Activated T-helper 1 cell treated with anti-CD3 and anti-CD28 coated beads, Interleukin-12 subunit alpha, Interleukin-12 subunit beta, Interleukin-2, Interleukin-4 antibody, amounts not matched to agents 30 ng/mL and 10 ng/mL and 1 ng/mL, durations not matched to agents 14 hours and 24 hours and 36 hours (primary cell): ENCODE measurements at regions of chr5 and their contacts with region 1.

Region 1: GRCh38 chr5:132490486-132491367 is at the start of gene IRF1:
- DNase-seq: peak; percentile 99
- H3K4me3 Mint-ChIP-seq: peak within 1 kb of the TSS; percentile 99
- H3K27ac Mint-ChIP-seq: peak within 1 kb of the TSS; percentile 95
- H3K4me1 Mint-ChIP-seq: peaks cover 76% of the 10 kb centered on the region
- H3K27me3 Mint-ChIP-seq: no peaks in the 10 kb centered on the region
- total RNA-seq, gene IRF1: 190 and 198 TPM in 2 replicates

Region 2: GRCh38 chr5:132094393-132095076 is 396.2 kb before region 1 on chr5:
- intact Hi-C with region 1: loop called (anchors 5 kb)
- DNase-seq: no peak
- H3K4me3 Mint-ChIP-seq: peak overlapping the region; percentile 8
- H3K27ac Mint-ChIP-seq: peak overlapping the region; percentile 90
- H3K4me1 Mint-ChIP-seq: peaks cover 80% of the 10 kb centered on the region
- H3K27me3 Mint-ChIP-seq: no peaks in the 10 kb centered on the region

Region 3: GRCh38 chr5:132410451-132411381 is 80.0 kb before region 1 on chr5:
- intact Hi-C with region 1: loop called (anchors 1 kb)
- DNase-seq: peak; percentile 90
- H3K4me3 Mint-ChIP-seq: peak overlapping the region; percentile 99
- H3K27ac Mint-ChIP-seq: peak overlapping the region; percentile 100
- H3K4me1 Mint-ChIP-seq: peaks cover 81% of the 10 kb centered on the region
- H3K27me3 Mint-ChIP-seq: no peaks in the 10 kb centered on the region

Region 4: DNA sequence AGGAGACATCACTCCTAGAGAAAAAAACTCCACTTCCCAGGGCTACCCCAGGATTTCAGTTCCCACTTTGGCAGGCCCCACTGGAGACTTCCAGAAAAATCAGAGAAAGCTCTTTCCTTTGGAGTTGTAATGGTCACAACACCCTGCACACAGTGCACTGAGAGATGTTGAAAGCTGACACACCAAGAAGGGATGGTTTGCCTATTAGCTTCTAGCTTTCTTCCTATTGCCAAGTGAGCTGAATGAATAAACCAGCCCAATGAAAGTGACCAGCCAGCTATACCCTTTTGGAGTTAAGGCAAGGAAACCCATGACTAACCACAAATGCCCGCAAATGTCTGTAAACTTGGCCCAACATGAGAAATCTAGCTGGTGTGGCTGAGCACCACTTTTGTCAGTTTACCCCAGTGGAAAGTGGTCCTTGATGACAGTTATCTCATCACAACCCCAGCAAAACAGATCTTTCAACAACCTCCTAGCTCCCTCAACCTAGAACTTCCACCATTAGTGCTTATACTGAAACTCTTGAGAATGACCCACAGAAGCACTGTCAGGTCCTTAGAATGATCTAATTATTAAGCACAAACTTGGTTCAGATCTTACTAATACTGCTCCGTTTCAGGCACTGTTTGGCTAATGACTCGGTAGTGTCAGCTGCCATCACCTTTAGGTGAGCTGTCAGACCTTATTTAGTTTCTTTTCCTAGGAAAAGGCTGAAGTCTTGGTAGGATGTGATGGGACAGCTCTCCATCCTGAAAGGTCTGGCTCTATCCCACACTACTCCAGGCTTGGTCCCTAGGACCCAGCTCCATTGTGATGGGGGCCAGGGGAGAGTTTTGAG is 11.4 kb before region 1 on chr5:
- intact Hi-C with region 1: loop called (anchors 1 kb)
- DNase-seq: no peak
- H3K4me3 Mint-ChIP-seq: no peak overlapping the region
- H3K27ac Mint-ChIP-seq: peak overlapping the region; percentile 48
- H3K4me1 Mint-ChIP-seq: peaks cover 69% of the 10 kb centered on the region
- H3K27me3 Mint-ChIP-seq: no peaks in the 10 kb centered on the region

Region 5: GRCh38 chr5:132963175-132964104 is 472.7 kb after region 1 on chr5 and contains the start of gene AFF4:
- intact Hi-C with region 1: loop called (anchors 2 kb)
- DNase-seq: peak; percentile 85
- H3K4me3 Mint-ChIP-seq: peak within 1 kb of the TSS; percentile 93
- H3K27ac Mint-ChIP-seq: peak within 1 kb of the TSS; percentile 96
- H3K4me1 Mint-ChIP-seq: peaks cover 17% of the 10 kb centered on the region
- H3K27me3 Mint-ChIP-seq: peaks cover 3% of the 10 kb centered on the region
- total RNA-seq, gene AFF4: 38.3 and 40.9 TPM in 2 replicates